Naive thymus-derived CD4-positive, alpha-beta T cell (primary cell): ENCODE measurements at regions of chr3 and their contacts with region 1.

Region 1: DNA sequence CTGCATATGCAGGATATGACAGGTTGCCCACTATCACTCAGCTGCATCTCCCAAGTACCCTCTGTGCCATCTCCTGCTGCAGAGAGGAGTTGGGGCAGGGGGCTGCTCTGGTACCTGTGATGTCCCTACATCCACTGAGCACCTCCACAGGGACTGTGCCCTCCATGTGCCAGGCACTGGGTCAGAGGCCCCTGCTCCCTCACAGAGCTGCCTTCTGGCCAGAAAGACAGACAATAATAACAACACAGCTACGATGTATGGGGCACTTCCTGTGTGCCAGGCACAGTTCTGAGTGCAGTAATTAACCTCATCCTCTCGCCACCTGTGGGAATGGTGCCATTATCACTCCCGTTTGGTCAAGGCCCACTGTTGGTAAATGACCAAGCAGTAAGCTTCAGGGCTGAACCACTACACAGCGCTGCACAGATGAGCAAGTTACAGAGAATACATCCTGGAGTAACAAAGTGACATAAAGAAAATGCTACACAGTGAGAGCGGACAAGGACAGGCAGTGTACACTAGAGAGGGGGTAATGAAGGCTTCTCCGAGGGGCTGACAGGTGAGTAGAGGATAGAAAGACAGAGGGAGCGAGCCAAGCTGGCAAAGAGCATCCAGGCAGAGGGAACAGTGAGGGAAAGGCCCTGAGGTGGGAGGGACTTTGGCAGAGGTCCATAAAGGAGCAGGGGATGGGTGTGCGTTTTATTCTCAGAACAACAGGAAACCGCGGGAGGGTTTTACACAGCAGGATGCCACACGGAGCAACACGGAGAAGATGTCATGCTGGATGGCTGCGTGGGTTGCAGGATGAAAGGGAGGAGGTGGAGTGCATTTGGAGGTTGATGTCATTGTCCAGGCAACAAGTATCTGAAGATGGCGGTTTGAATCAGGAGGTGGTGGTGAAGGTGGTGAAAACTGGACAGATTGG is 13.6 kb downstream of the WNT7A start:
- DNase-seq: peak; percentile 28 to 92 (median 86)
- ATAC-seq: peak; percentile 93
- H3K4me3 ChIP-seq: peak overlapping the region; percentile 26
- H3K4me3 Mint-ChIP-seq: peak overlapping the region; percentile 74 to 86 (median 78)
- H3K27ac ChIP-seq: peak overlapping the region; percentile 92
- H3K27ac Mint-ChIP-seq: peak overlapping the region; percentile 94 to 99 (median 97)
- H3K4me1 ChIP-seq: peaks cover 21 to 61% of the 10 kb centered on the region in 2 donors
- H3K4me1 Mint-ChIP-seq: peaks cover 44 to 87% (median 74%) of the 10 kb centered on the region in 7 donors
- H3K27me3 ChIP-seq: no peaks in the 10 kb centered on the region
- H3K27me3 Mint-ChIP-seq: peaks cover 0 to 8% (median 0%) of the 10 kb centered on the region in 5 donors

Region 2: DNA sequence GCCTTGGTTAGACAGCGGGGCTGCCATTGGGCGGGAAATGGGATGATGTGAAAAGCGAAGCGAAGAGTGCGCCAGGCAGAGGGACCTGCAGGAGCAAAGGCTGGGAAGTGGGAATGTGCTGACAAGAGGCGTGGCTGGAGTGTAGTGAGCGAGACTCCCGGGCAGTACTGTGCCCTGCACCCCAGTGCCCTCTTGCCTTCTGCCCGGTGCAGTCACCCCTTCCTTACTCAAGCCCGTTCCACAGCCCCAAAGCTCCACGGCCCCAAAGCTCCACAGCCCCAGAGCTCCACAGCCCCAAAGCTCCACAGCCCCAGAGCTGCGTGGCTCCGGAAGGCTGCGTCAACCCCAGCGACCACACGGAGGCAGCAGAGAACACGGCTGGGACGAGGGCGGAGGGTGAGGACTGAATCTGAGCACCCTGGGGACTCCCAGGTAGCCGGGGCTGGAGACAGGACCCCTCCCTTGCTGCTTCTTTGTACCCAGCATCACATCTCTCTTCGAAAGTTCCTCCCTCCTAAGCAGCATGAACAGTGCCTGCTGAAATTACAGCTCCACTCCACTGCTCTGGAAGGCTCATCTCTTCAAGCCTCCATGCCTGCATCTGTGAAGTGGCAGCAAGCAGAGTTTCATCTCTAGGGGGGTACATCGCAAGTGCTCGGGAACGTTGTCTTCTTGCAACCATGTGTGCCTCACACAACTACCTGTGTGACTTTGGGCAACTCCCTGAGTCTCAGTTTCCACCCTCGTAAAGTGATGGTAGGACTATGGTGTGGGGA is 208.5 kb before region 1 on chr3:
- CTCF ChIA-PET with region 1: interaction called, 10 read pairs
- POLR2A ChIA-PET with region 1: interaction called, 9 read pairs
- intact Hi-C with region 1: no loop called
- DNase-seq: peak; percentile 47 to 77 (median 70)
- ATAC-seq: peak; percentile 88
- H3K4me3 ChIP-seq: no peak overlapping the region
- H3K4me3 Mint-ChIP-seq: peak overlapping the region in 2 of 10 donors; percentile 34 to 51
- H3K27ac ChIP-seq: no peak overlapping the region
- H3K27ac Mint-ChIP-seq: no peak overlapping the region
- H3K4me1 ChIP-seq: peaks cover 0 to 19% of the 10 kb centered on the region in 2 donors
- H3K4me1 Mint-ChIP-seq: peaks cover 2 to 34% (median 30%) of the 10 kb centered on the region in 7 donors
- H3K27me3 ChIP-seq: no peaks in the 10 kb centered on the region
- H3K27me3 Mint-ChIP-seq: peaks cover 0 to 39% (median 8%) of the 10 kb centered on the region in 5 donors

Region 3: GRCh38 chr3:13822042-13822441 is 44.3 kb before region 1 on chr3:
- CTCF ChIA-PET with region 1: interaction called, 3 read pairs
- POLR2A ChIA-PET with region 1: interaction called, 5 read pairs
- intact Hi-C with region 1: loop called in 1 of 2 experiments (anchors 2 kb)
- DNase-seq: no peak
- ATAC-seq: no peak
- H3K4me3 ChIP-seq: no peak overlapping the region
- H3K4me3 Mint-ChIP-seq: no peak overlapping the region
- H3K27ac ChIP-seq: no peak overlapping the region
- H3K27ac Mint-ChIP-seq: peak overlapping the region in 3 of 9 donors; percentile 26 to 70 (median 57)
- H3K4me1 ChIP-seq: no peaks in the 10 kb centered on the region
- H3K4me1 Mint-ChIP-seq: peaks cover 0 to 26% (median 9%) of the 10 kb centered on the region in 7 donors
- H3K27me3 ChIP-seq: no peaks in the 10 kb centered on the region
- H3K27me3 Mint-ChIP-seq: peaks cover 0 to 3% (median 0%) of the 10 kb centered on the region in 5 donors

Region 4: GRCh38 chr3:14274999-14275961 is 409.0 kb after region 1 on chr3:
- CTCF ChIA-PET with region 1: no interaction called
- POLR2A ChIA-PET with region 1: no interaction called
- intact Hi-C with region 1: no loop called
- DNase-seq: no peak
- ATAC-seq: no peak
- H3K4me3 ChIP-seq: no peak overlapping the region
- H3K4me3 Mint-ChIP-seq: no peak overlapping the region
- H3K27ac ChIP-seq: no peak overlapping the region
- H3K27ac Mint-ChIP-seq: no peak overlapping the region
- H3K4me1 ChIP-seq: no peaks in the 10 kb centered on the region
- H3K4me1 Mint-ChIP-seq: no peaks in the 10 kb centered on the region
- H3K27me3 ChIP-seq: no peaks in the 10 kb centered on the region
- H3K27me3 Mint-ChIP-seq: peaks cover 0 to 10% (median under 1%) of the 10 kb centered on the region in 5 donors